ENCODE measurements at regions of chr19 and their contacts with region 1.

Region 1: DNA sequence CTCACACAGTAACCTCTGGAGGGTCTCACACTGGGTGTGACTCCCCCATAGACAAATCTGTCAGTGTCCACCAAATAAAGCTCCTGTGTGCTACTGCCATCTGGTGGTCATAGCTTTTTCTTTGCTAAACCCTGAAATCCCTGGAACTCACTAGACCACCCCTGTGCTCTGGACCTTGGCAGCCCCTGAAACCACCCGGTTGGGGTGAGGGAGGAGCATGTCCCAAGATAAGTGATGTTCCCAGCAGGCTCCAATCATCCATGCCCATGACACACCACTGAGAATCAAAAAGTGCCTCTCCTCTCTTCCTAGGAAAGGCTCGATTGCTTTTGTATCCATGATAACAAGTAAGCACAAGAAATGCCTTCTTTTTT is 6.5 kb upstream of the HSD17B14 start:
- DNase-seq: peak; percentile 70
- H3K4me3 Mint-ChIP-seq: no peak overlapping the region
- H3K27ac Mint-ChIP-seq: no peak overlapping the region
- H3K4me1 Mint-ChIP-seq: no peaks in the 10 kb centered on the region
- H3K27me3 Mint-ChIP-seq: no peaks in the 10 kb centered on the region

Region 2: GRCh38 chr19:48674921-48675824 is 167.6 kb before region 1 on chr19:
- CTCF ChIA-PET with region 1: no interaction called
- intact Hi-C with region 1: no loop called
- DNase-seq: peak; percentile 86
- H3K4me3 Mint-ChIP-seq: no peak overlapping the region
- H3K27ac Mint-ChIP-seq: no peak overlapping the region
- H3K4me1 Mint-ChIP-seq: peaks cover 5% of the 10 kb centered on the region
- H3K27me3 Mint-ChIP-seq: no peaks in the 10 kb centered on the region

Region 3: GRCh38 chr19:48698046-48698445 is 144.7 kb before region 1 on chr19:
- CTCF ChIA-PET with region 1: no interaction called
- intact Hi-C with region 1: no loop called
- DNase-seq: no peak
- H3K4me3 Mint-ChIP-seq: no peak overlapping the region
- H3K27ac Mint-ChIP-seq: no peak overlapping the region
- H3K4me1 Mint-ChIP-seq: peaks cover 15% of the 10 kb centered on the region
- H3K27me3 Mint-ChIP-seq: peaks cover 15% of the 10 kb centered on the region

Region 4: DNA sequence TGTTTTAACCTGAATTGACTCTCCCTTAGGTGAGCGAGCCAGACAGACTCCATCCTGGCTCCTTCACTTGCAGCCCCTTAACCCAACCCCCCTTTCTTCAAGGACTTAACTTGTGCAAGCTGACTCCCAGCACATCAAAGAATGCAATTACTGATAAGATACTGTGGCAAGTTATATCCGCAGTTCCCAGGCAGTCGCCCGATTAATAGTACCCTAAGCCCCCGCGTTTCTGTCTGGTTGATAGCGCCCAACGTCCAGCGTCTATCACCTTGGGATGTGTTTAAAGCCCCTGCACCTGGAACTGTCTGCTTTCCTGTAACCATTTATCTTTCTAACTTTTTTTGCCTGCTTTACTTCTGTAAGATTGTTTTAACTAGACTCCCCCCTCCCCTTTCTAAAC is 12.7 kb before region 1 on chr19:
- CTCF ChIA-PET with region 1: interaction called, 11 read pairs
- intact Hi-C with region 1: no loop called
- DNase-seq: no peak
- H3K4me3 Mint-ChIP-seq: no peak overlapping the region
- H3K27ac Mint-ChIP-seq: no peak overlapping the region
- H3K4me1 Mint-ChIP-seq: no peaks in the 10 kb centered on the region
- H3K27me3 Mint-ChIP-seq: no peaks in the 10 kb centered on the region

Region 5: DNA sequence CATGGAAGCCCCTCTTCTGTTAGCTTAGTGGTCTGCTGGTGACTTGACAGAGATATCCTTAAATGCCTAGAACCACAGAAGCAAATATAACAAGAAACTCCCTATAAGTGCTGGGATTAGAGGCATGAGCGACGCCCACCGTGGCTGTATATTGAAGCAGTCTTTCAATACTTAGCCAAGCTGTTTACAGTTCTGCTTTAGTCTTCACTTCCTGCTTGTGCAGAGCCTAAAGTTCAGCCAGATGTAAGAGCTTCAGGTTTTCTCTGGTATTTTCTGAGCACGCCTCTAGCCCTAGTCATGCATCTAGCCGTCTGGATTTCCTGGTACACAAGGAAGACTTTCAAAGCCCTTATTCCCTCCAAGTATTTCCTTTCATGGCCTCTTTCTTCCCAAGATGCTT is 343.3 kb after region 1 on chr19:
- CTCF ChIA-PET with region 1: no interaction called
- intact Hi-C with region 1: no loop called
- DNase-seq: no peak
- H3K4me3 Mint-ChIP-seq: no peak overlapping the region
- H3K27ac Mint-ChIP-seq: no peak overlapping the region
- H3K4me1 Mint-ChIP-seq: peaks cover 9% of the 10 kb centered on the region
- H3K27me3 Mint-ChIP-seq: peaks cover 5% of the 10 kb centered on the region

Measured in activated naive CD4-positive, alpha-beta T cell treated with anti-CD3 and anti-CD28 coated beads for 36 hours (primary cell).